ENCODE measurements at regions of chr9 and their contacts with region 1.

Region 1: GRCh38 chr9:114291064-114291474 is 31.8 kb upstream of the ORM1 start:
- DNase-seq: no peak
- H3K4me3 ChIP-seq: no peak overlapping the region
- H3K27ac ChIP-seq: no peak overlapping the region
- H3K27me3 ChIP-seq: no peaks in the 10 kb centered on the region
- CTCF ChIP-seq: peak; percentile 83

Region 2: GRCh38 chr9:113957821-113958341 is 333.2 kb before region 1 on chr9:
- CTCF ChIA-PET with region 1: no interaction called
- POLR2A ChIA-PET with region 1: interaction called, 13 read pairs
- DNase-seq: peak; percentile 60
- H3K4me3 ChIP-seq: peak overlapping the region; percentile 15; the same call in 1 of the 2 replicates
- H3K27ac ChIP-seq: peak overlapping the region; percentile 89
- H3K27me3 ChIP-seq: no peaks in the 10 kb centered on the region
- CTCF ChIP-seq: no peak

Region 3: DNA sequence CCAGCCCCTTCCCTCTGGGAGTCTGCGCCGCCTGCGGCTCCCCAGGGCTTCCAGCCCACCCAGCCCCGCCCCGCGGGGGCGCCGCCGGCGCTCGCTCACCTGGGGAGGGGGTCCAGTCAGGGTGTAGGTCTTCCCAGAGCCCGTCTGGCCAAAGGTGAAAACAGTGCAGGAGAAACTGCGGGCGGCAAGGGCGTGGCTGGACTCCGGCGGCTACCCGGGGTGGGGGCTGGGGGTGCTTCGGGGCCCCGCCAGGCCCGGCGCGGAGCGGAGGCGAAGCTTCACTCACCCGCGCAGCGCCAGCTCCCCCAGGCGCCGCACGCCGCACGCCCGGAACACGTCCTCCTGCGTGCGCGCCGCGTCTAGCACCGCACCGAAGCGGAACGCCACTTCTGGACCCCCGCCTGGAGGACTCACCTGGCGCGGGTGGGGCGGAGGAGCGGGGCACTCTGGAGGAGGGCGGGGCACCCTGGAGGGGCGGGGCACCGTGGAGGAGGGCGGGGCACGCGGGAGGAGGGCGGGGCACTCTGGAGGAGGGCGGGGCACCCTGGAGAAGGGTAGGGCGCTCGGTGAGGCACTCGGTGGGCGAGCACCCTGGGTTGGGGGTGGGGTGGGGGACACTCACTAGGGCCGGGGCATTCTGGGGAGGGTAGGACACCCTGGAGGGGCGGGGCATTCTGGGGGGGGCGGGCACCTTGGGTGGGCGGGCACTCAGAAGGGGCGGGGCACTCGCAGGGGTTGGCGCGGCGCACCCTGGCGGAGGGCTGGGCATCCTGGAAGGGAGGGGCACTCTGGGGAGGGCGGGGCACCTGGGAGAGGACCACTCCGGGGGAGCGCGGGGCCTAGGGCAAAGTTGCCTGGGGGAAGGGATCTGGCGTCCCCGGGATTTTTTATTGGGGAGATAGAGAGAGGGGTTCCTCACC is 192.8 kb before region 1 on chr9:
- CTCF ChIA-PET with region 1: interaction called, 25 read pairs
- POLR2A ChIA-PET with region 1: no interaction called
- DNase-seq: no peak
- H3K4me3 ChIP-seq: peak overlapping the region; percentile 44; the same call in 1 of the 2 replicates
- H3K27ac ChIP-seq: no peak overlapping the region
- H3K27me3 ChIP-seq: peaks cover 32% of the 10 kb centered on the region
- CTCF ChIP-seq: no peak

Region 4: DNA sequence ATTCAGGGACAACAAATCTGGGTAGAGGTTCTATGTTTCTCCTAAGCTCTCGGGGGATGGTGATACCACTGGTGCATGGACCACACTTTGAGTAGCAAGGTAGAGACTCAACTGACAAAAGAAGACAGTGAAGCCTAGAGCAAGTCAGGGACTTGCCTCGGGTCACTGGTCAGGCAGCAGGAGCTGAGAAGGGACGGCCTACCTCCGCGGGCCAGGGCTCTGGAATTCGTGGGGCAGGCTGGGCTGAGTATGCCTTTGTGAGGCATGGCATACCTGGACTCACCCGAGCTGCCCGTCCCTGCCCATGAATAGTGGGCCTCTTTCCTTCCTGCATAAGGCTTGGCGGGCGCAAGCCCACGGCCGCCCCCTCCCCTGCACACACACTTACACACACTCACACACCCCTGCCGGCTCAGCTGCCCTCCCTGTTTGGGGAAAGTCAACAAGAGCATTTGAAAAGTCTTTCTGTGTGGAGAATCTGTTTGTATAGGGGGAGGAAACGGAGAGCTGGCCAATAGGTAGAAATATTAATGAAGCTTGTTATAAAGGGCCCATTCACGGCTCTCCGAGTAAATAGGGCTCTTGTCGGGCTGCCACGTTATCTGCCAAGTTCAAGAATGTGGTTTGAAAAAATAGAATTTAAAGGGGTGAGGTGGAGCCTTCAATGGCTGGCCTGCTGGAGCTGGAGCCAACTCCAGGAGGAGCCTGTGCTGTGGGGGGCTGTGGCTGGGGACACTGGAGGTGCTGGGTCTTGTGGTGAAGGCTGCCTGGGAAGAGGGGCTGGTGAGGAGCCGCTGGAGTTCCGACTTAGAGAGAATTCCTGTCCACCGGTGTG is 172.9 kb before region 1 on chr9:
- CTCF ChIA-PET with region 1: interaction called, 348 read pairs
- POLR2A ChIA-PET with region 1: no interaction called
- DNase-seq: no peak
- H3K4me3 ChIP-seq: no peak overlapping the region
- H3K27ac ChIP-seq: no peak overlapping the region
- H3K27me3 ChIP-seq: peaks cover 63% of the 10 kb centered on the region
- CTCF ChIP-seq: no peak

Region 5: GRCh38 chr9:114155263-114155972 is 135.7 kb before region 1 on chr9 and contains the start of gene COL27A1:
- CTCF ChIA-PET with region 1: interaction called, 56 read pairs
- POLR2A ChIA-PET with region 1: interaction called, 3 read pairs
- DNase-seq: no peak
- H3K4me3 ChIP-seq: peak within 1 kb of the TSS; percentile 76
- H3K27ac ChIP-seq: peak within 1 kb of the TSS; percentile 47
- H3K27me3 ChIP-seq: peaks cover 11% of the 10 kb centered on the region
- CTCF ChIP-seq: peak; percentile 88
- polyA plus RNA-seq, gene COL27A1: 8.5 and 10.0 TPM in 2 replicates

Region 6: GRCh38 chr9:114271641-114272081 is 19.4 kb before region 1 on chr9:
- CTCF ChIA-PET with region 1: interaction called, 33 read pairs
- POLR2A ChIA-PET with region 1: no interaction called
- DNase-seq: no peak
- H3K4me3 ChIP-seq: no peak overlapping the region
- H3K27ac ChIP-seq: no peak overlapping the region
- H3K27me3 ChIP-seq: no peaks in the 10 kb centered on the region
- CTCF ChIP-seq: peak; percentile 54

Measured in AG04450 (cell line).